Mammary epithelial cell (primary cell): ENCODE measurements at regions of chr19 and their contacts with region 1.

Region 1: DNA sequence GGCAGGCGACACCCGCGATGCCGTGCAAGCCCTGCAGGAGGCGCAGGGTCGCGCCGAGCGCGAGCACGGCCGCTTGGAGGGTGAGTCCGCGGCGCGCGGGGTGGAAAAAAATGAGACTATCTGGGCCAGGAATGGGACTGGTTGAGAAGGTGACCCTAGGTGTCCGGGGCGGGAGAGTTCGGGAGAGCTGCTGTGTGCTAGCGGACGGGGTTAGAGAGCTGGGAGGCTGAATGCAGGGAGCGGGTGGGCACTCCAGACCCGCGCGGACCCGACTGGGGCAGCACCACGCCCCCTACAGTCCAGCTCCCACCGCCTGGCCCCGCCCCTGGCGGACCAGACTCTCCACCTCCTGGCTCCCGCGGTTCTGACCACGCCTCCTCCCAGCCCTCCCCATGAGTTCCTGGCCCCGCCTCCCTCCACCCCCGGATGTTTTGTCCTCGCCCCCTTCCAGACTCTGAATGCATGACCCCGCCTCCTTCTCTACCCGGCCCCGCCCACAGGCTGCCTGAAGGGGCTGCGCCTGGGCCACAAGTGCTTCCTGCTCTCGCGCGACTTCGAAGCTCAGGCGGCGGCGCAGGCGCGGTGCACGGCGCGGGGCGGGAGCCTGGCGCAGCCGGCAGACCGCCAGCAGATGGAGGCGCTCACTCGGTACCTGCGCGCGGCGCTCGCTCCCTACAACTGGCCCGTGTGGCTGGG is 1.5 kb downstream of the CLEC11A start:
- DNase-seq: peak; percentile 99
- H3K4me3 ChIP-seq: peak overlapping the region; percentile 66 to 82 (median 66)
- H3K27ac ChIP-seq: peak overlapping the region; percentile 39
- H3K4me1 ChIP-seq: peaks cover 25% of the 10 kb centered on the region
- H3K27me3 ChIP-seq: no peaks in the 10 kb centered on the region
- CTCF ChIP-seq: peak; percentile 40 to 64

Region 2: GRCh38 chr19:50368649-50369570 is 355.8 kb before region 1 on chr19:
- CTCF ChIA-PET with region 1: no interaction called
- dilution Hi-C with region 1: no loop called
- in situ Hi-C with region 1: no loop called
- intact Hi-C with region 1: loop called (anchors 5 kb)
- DNase-seq: peak; percentile 73
- H3K4me3 ChIP-seq: peak overlapping the region; percentile 72 to 75 (median 74)
- H3K27ac ChIP-seq: peak overlapping the region; percentile 36
- H3K4me1 ChIP-seq: peaks cover 5% of the 10 kb centered on the region
- H3K27me3 ChIP-seq: no peaks in the 10 kb centered on the region
- CTCF ChIP-seq: peak; percentile 68 to 82

Region 3: GRCh38 chr19:50649433-50650391 is 75.0 kb before region 1 on chr19 and contains the start of gene C19orf81:
- CTCF ChIA-PET with region 1: no interaction called
- dilution Hi-C with region 1: no loop called
- in situ Hi-C with region 1: no loop called
- intact Hi-C with region 1: no loop called
- DNase-seq: no peak
- H3K4me3 ChIP-seq: no peak within 1 kb of the TSS
- H3K27ac ChIP-seq: no peak within 1 kb of the TSS
- H3K4me1 ChIP-seq: no peaks in the 10 kb centered on the region
- H3K27me3 ChIP-seq: no peaks in the 10 kb centered on the region
- CTCF ChIP-seq: no peak
- total RNA-seq, gene C19orf81: not detected

Region 4: GRCh38 chr19:50713556-50714236 is 11.0 kb before region 1 on chr19:
- CTCF ChIA-PET with region 1: interaction called, 23 read pairs
- dilution Hi-C with region 1: no loop called
- in situ Hi-C with region 1: no loop called
- intact Hi-C with region 1: no loop called
- DNase-seq: no peak
- H3K4me3 ChIP-seq: no peak overlapping the region
- H3K27ac ChIP-seq: no peak overlapping the region
- H3K4me1 ChIP-seq: no peaks in the 10 kb centered on the region
- H3K27me3 ChIP-seq: no peaks in the 10 kb centered on the region
- CTCF ChIP-seq: no peak

Region 5: GRCh38 chr19:50759886-50760285 is 35.2 kb after region 1 on chr19:
- CTCF ChIA-PET with region 1: interaction called, 32 read pairs
- dilution Hi-C with region 1: no loop called
- in situ Hi-C with region 1: no loop called
- intact Hi-C with region 1: no loop called
- DNase-seq: no peak
- H3K4me3 ChIP-seq: no peak overlapping the region
- H3K27ac ChIP-seq: no peak overlapping the region
- H3K4me1 ChIP-seq: no peaks in the 10 kb centered on the region
- H3K27me3 ChIP-seq: no peaks in the 10 kb centered on the region
- CTCF ChIP-seq: no peak

Region 6: DNA sequence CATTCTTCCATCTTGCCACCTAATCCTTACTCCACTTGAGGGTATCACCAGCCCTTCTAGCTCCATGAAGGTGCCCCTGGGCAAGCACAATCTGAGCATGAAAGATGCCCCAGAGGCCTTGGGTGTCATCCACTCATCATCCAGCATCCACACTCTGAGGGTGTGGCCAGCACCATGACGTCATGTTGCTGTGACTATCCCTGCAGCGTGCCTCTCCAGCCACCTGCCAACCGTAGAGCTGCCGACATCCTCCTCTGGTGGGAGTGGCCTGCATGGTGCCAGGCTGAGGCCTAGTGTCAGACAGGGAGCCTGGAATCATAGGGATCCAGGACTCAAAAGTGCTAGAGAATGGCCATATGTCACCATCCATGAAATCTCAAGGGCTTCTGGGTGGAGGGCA is 127.0 kb after region 1 on chr19:
- CTCF ChIA-PET with region 1: no interaction called
- dilution Hi-C with region 1: no loop called
- in situ Hi-C with region 1: no loop called
- intact Hi-C with region 1: no loop called
- DNase-seq: no peak
- H3K4me3 ChIP-seq: no peak overlapping the region
- H3K27ac ChIP-seq: no peak overlapping the region
- H3K4me1 ChIP-seq: no peaks in the 10 kb centered on the region
- H3K27me3 ChIP-seq: peaks cover 2% of the 10 kb centered on the region
- CTCF ChIP-seq: no peak

Region 7: GRCh38 chr19:50909240-50910070 is 184.8 kb after region 1 on chr19:
- CTCF ChIA-PET with region 1: no interaction called
- dilution Hi-C with region 1: no loop called
- in situ Hi-C with region 1: loop called in 1 of 2 experiments (anchors 10 kb)
- intact Hi-C with region 1: no loop called
- DNase-seq: peak; percentile 39
- H3K4me3 ChIP-seq: peak overlapping the region in 2 of 3 experiments; percentile 2 to 35
- H3K27ac ChIP-seq: no peak overlapping the region
- H3K4me1 ChIP-seq: peaks cover 8% of the 10 kb centered on the region
- H3K27me3 ChIP-seq: peaks cover 20% of the 10 kb centered on the region
- CTCF ChIP-seq: no peak